SK-N-SH (cell line): ENCODE measurements at regions of chr11 and their contacts with region 1.

Region 1: DNA sequence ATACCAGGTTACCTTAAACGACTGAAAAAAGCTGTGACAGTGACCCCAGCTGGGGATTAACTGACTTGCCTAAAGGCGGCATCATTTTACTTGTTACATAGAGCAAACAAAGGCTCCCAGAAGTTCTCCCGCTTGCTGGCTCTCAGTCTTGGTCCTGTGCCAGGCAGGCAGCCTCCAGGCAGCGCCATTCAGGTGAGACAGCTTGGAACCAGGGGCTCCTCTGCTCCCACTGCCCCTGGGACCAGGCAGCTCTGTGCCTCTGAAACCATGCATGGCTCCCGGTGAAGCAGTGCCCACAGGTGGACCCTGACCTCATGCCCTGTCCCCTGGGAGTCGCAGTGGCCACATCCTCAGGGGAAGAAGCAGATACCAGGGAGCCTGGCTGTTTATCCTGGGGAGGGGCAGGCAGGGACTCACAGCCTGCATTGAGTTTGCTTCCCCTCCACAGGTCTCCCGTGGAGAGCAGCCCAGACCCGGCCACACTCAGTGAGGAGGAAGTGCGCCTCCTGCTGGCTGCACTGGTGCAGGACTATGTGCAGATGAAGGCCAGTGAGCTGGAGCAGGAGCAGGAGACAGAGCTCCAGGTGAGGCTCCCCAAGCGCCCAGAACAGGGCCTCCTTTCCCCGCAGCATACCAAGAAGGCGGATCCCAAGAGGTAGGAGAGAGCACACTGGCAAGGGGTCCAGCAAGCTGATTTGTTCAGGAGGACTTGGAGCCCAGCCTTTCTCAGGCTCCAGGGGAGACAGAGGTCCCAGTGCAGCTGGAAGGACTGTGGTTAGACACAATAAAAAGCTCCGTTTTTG is 15.6 kb upstream of the CYP2R1 start:
- DNase-seq: peak; percentile 71
- H3K4me3 ChIP-seq: peak overlapping the region in 1 of 2 experiments; percentile 28; a peak in 1 of 4 replicates
- H3K27ac ChIP-seq: no peak overlapping the region
- H3K4me1 ChIP-seq: peaks cover 0 to 3% of the 10 kb centered on the region in 2 experiments; a peak in 2 of 4 replicates
- H3K27me3 ChIP-seq: no peaks in the 10 kb centered on the region; the same call in 1 of the 2 replicates
- CTCF ChIP-seq: peak; percentile 77
- EP300 ChIP-seq: no peak
- RAD21 ChIP-seq: peak; percentile 68

Region 2: DNA sequence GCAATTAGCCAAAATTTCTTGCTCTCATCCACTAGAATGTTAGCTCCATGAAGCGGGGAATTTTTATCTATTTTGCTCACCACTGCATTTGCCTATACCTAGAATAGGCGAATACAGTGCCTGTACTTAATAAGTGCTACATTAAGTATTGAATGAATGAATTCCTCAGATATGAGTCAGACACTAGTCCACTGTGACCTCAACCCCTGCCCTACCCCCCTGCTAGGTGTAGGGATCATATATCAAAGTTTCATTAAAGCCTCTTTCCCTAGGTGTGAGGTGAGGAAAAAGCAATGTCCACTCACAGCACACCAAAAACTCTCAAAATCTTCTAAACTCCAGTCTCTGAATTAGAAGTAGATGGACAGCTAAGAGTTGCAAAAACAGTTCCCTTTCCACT is 377.7 kb before region 1 on chr11:
- CTCF ChIA-PET with region 1: interaction called, 26 read pairs
- POLR2A ChIA-PET with region 1: no interaction called
- DNase-seq: no peak
- H3K4me3 ChIP-seq: no peak overlapping the region
- H3K27ac ChIP-seq: no peak overlapping the region
- H3K4me1 ChIP-seq: no peaks in the 10 kb centered on the region
- H3K27me3 ChIP-seq: no peaks in the 10 kb centered on the region
- CTCF ChIP-seq: no peak
- EP300 ChIP-seq: no peak
- RAD21 ChIP-seq: no peak

Region 3: DNA sequence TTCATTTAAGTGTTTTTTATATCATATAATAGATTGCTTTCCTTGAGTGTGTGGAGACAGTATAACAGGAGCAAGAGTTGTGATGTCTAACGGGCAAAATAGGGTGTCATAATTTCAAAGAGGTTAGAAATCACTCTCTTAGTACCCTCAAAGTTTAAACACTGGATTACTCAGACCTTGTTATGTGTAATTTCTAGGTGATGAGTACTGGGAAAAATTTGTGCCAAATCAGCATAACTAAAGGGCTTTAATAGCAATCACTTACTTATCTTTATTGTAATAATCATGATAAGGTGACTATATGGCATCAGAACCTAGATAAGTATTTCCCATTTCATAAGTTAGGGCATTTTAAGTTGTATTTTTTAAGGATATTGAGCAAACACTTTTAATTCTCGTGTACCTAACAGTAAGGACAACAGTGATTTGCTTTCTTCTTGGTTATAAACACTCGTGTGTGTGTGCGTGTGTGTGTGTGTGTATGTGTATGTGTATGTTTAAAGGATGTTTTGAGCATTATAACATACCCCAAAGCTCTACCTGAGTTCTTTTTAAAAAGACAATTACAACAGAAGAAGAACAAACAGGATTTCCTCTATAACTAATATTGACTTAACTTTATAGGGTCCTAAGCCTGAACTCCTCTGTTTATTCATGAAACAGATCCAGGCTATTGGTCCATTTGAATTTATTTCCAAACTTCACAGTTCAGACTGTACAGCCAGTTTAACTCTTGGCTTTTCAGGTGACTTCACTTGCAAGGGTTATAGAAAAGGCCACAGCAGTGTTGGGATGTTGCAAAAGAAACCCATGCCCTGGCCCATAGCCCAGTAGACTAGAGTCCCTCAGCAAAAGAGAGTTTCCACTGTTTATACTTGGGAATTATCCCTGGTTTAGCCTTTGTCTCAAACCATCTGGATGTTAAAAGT is 287.7 kb before region 1 on chr11:
- CTCF ChIA-PET with region 1: no interaction called
- POLR2A ChIA-PET with region 1: no interaction called
- DNase-seq: no peak
- H3K4me3 ChIP-seq: no peak overlapping the region
- H3K27ac ChIP-seq: no peak overlapping the region
- H3K4me1 ChIP-seq: peaks cover 0 to 2% of the 10 kb centered on the region in 2 experiments; a peak in 1 of 4 replicates
- H3K27me3 ChIP-seq: no peaks in the 10 kb centered on the region
- CTCF ChIP-seq: no peak
- EP300 ChIP-seq: no peak
- RAD21 ChIP-seq: no peak

Region 4: DNA sequence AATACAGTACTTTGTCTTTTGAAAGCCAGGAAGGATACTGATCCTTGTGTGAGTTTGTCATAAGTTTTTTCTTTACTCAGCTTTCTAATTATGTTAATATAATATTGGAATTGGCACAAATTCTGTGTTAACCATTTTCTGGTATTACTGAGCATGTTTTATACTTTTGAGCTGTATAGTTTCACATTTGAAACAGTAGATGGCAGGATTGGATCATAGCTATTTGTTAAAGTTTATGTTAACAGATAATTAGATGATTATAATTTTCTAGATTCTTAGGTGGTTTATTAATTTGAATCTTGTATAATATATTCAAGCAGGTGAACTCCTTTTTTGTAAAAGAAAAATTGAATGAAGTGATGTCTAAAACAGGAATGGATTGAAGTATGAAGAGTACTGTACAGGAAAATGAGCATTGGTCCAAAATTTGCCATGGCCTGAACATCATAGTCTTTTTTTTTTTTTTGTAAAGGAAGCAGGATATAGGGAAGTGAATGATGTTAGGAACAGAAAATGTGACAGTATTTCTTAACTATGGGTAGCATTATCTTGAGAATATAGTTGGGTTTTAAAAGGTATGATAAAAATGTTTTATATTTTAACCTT is 117.6 kb before region 1 on chr11:
- CTCF ChIA-PET with region 1: interaction called, 69 read pairs
- POLR2A ChIA-PET with region 1: no interaction called
- DNase-seq: no peak
- H3K4me3 ChIP-seq: no peak overlapping the region
- H3K27ac ChIP-seq: no peak overlapping the region
- H3K4me1 ChIP-seq: no peaks in the 10 kb centered on the region; a peak in 1 of 4 replicates
- H3K27me3 ChIP-seq: no peaks in the 10 kb centered on the region
- CTCF ChIP-seq: peak; percentile 75
- EP300 ChIP-seq: no peak
- RAD21 ChIP-seq: peak; percentile 61

Region 5: GRCh38 chr11:14954581-14954980 is 47.0 kb after region 1 on chr11:
- CTCF ChIA-PET with region 1: interaction called, 12 read pairs
- POLR2A ChIA-PET with region 1: no interaction called
- DNase-seq: no peak
- H3K4me3 ChIP-seq: no peak overlapping the region
- H3K27ac ChIP-seq: no peak overlapping the region
- H3K4me1 ChIP-seq: no peaks in the 10 kb centered on the region
- H3K27me3 ChIP-seq: no peaks in the 10 kb centered on the region
- CTCF ChIP-seq: no peak
- EP300 ChIP-seq: no peak
- RAD21 ChIP-seq: no peak

Region 6: GRCh38 chr11:15074206-15075161 is 166.9 kb after region 1 on chr11:
- CTCF ChIA-PET with region 1: interaction called, 198 read pairs
- POLR2A ChIA-PET with region 1: interaction called, 8 read pairs
- DNase-seq: peak; percentile 83
- H3K4me3 ChIP-seq: peak overlapping the region; percentile 50 to 57
- H3K27ac ChIP-seq: no peak overlapping the region; a peak in 1 of 4 replicates
- H3K4me1 ChIP-seq: peaks cover 0 to 15% of the 10 kb centered on the region in 2 experiments; a peak in 1 of 4 replicates
- H3K27me3 ChIP-seq: peaks cover 17% of the 10 kb centered on the region
- CTCF ChIP-seq: peak; percentile 70
- EP300 ChIP-seq: no peak
- RAD21 ChIP-seq: peak; percentile 83

Region 7: DNA sequence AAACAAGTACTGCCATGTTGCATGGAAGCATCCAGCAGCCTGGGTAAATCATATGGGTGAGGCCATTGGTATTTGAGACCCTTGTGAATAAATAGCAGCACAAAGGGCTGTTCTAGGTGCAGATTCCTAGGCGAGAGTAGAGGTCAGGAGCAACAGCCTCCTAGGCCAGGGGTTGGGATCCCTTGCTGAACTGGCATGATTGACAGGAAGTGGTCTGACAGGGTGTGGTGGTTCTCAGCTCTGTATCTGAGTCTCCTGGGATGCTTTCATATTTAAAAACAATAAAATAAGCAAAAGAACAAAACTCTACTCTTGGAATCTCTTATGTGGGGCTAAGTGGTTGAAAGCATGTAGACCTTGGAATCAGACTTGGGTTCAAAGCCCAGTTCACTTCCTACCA is 242.9 kb after region 1 on chr11:
- CTCF ChIA-PET with region 1: no interaction called
- POLR2A ChIA-PET with region 1: no interaction called
- DNase-seq: no peak
- H3K4me3 ChIP-seq: no peak overlapping the region
- H3K27ac ChIP-seq: no peak overlapping the region
- H3K4me1 ChIP-seq: peaks cover 0 to 2% of the 10 kb centered on the region in 2 experiments; a peak in 1 of 4 replicates
- H3K27me3 ChIP-seq: no peaks in the 10 kb centered on the region
- CTCF ChIP-seq: no peak
- EP300 ChIP-seq: no peak
- RAD21 ChIP-seq: no peak

Region 8: DNA sequence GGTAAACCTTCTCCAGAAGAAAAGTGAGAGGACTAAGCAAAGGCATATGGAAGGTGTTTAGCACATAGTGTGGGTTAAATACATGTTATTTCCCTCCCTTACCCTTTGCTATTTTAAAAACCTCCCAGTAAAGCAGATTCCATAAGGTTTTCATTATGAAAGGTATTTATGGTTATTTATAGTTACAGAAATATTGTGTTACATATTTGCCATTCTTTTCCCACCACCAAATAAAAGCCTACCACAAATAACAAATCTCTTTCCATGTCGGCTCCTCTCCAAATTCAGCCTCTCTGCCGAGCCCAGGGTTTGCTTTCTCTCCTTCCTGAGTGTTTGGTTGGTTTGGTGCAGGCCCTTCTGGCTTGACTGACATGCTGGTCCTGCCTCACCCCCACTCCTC is 271.6 kb after region 1 on chr11:
- CTCF ChIA-PET with region 1: no interaction called
- POLR2A ChIA-PET with region 1: no interaction called
- DNase-seq: no peak
- H3K4me3 ChIP-seq: no peak overlapping the region
- H3K27ac ChIP-seq: peak overlapping the region in 1 of 2 experiments; percentile 28; a peak in 1 of 4 replicates
- H3K4me1 ChIP-seq: peaks cover 0 to 7% of the 10 kb centered on the region in 2 experiments; a peak in 2 of 4 replicates
- H3K27me3 ChIP-seq: no peaks in the 10 kb centered on the region
- CTCF ChIP-seq: no peak
- EP300 ChIP-seq: no peak
- RAD21 ChIP-seq: no peak

Region 9: DNA sequence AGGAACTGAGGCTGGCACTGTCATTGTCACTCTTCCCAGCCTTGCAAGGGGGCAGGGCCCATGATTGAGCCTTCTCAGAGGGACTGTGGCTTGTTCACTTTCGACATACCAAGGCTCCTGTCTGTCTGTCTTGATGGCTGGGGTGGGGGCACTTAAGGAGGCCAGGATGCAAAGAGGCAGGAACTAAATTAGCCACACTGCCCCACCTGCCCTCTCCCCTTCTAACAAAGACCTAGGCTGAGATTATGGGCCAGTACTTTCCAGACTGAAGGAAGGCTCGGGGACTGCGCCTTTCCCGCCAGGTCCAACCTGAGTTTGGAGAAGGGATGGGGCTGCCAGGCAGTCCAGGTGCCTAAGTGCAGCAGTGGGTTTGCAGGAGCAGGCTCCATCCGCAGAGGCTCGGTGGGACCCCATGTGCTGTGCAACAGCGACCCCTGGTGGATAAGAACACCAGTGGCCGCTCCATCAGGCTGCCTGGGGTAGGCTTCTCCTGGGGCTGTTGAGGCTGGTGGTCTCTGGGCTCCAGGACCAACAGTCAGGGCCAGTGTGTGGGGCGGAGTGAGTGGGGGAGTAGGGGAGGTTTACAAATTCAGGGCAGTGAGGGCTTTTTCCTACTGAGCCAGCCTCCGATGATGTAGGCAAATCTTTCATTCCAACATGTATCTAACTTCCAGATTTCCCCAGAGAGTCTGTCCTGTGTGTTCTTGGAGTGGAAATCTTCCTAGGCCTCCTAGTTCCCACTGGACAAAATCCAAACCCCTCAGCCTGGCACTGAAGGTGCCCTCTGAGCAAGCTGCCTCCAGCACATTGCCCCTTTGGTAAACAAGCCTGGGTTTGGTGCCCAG is 301.0 kb after region 1 on chr11:
- CTCF ChIA-PET with region 1: interaction called, 36 read pairs
- POLR2A ChIA-PET with region 1: no interaction called
- DNase-seq: peak; percentile 87
- H3K4me3 ChIP-seq: no peak overlapping the region; a peak in 1 of 4 replicates
- H3K27ac ChIP-seq: no peak overlapping the region
- H3K4me1 ChIP-seq: peaks cover 0 to 6% of the 10 kb centered on the region in 2 experiments; a peak in 1 of 4 replicates
- H3K27me3 ChIP-seq: no peaks in the 10 kb centered on the region
- CTCF ChIP-seq: peak; percentile 83
- EP300 ChIP-seq: no peak
- RAD21 ChIP-seq: peak; percentile 96

Region 10: GRCh38 chr11:15291885-15292284 is 384.3 kb after region 1 on chr11:
- CTCF ChIA-PET with region 1: no interaction called
- POLR2A ChIA-PET with region 1: no interaction called
- DNase-seq: no peak
- H3K4me3 ChIP-seq: no peak overlapping the region
- H3K27ac ChIP-seq: no peak overlapping the region
- H3K4me1 ChIP-seq: peaks cover 0 to 14% of the 10 kb centered on the region in 2 experiments; a peak in 1 of 4 replicates
- H3K27me3 ChIP-seq: no peaks in the 10 kb centered on the region
- CTCF ChIP-seq: no peak
- EP300 ChIP-seq: no peak
- RAD21 ChIP-seq: no peak